Activated CD8-positive, alpha-beta T cell treated with anti-CD3 and anti-CD28 coated beads, Interleukin-2, amount 10 ng/mL, durations not matched to agents 7 days and 5 days (primary cell): ENCODE measurements at regions of chr3 and their contacts with region 1.

Region 1: DNA sequence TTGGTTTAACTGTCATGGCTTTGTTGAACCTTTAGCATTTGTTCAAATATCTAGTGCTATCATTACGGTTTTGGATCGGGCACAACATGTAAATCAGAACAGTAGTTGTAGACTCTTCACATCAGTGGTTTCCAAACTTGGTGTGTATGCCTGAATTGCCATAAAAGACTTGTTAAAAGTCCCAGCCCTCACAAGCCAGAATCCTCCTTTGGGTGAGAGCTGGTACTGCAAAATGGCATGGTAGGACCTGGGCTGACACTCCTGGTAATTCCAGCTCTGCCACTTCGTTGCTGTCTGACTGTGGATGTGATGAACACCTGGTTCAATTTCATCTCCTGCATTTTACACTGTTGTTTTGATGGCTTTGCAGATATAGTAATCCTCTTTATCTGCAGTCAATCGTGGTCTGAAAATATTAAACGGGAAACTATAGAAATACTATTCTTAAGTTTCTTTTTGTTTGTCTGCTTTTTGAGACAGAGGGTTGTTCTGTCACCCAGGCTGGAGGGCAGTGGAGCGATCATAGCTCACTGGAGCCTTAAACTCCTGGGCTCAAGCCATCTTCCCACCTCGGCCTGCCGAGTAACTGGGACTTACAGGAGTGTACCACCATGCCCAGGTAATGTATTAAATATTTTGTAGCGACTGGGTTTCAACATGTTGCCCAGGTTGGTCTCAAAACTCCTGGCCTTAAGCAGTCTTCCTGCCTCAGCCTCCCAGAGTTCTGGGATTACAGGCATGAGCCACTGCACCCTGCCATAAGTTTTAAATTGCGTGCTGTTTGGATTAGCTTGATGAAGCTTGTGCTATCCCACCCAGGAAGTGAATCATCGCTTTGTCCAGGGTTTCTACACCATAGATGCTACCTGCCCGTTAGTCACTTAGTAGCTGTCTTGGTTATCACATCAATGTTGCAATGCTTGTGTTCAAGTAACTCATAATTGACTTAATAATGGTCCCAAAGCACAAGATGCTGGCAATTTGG is 61.6 kb downstream of the RAB7A start:
- DNase-seq: peak; percentile 53
- ATAC-seq: peak; percentile 64
- H3K4me3 Mint-ChIP-seq: peak overlapping the region; percentile 75
- H3K27ac Mint-ChIP-seq: peak overlapping the region; percentile 96
- H3K4me1 Mint-ChIP-seq: peaks cover 82% of the 10 kb centered on the region
- H3K27me3 Mint-ChIP-seq: no peaks in the 10 kb centered on the region

Region 2: GRCh38 chr3:128674161-128674784 is 113.3 kb before region 1 on chr3:
- CTCF ChIA-PET with region 1: interaction called, 256 read pairs
- POLR2A ChIA-PET with region 1: no interaction called
- DNase-seq: no peak
- ATAC-seq: no peak
- H3K4me3 Mint-ChIP-seq: peak overlapping the region; percentile 50
- H3K27ac Mint-ChIP-seq: peak overlapping the region; percentile 73
- H3K4me1 Mint-ChIP-seq: peaks cover 17% of the 10 kb centered on the region
- H3K27me3 Mint-ChIP-seq: peaks cover 25% of the 10 kb centered on the region

Region 3: GRCh38 chr3:128725932-128726690 is 61.4 kb before region 1 on chr3 and contains the start of gene RAB7A:
- CTCF ChIA-PET with region 1: interaction called, 5 read pairs
- POLR2A ChIA-PET with region 1: interaction called, 10 read pairs
- DNase-seq: peak; percentile 98
- ATAC-seq: peak; percentile 95
- H3K4me3 Mint-ChIP-seq: peak within 1 kb of the TSS; percentile 86
- H3K27ac Mint-ChIP-seq: peak within 1 kb of the TSS; percentile 91
- H3K4me1 Mint-ChIP-seq: peaks cover 48% of the 10 kb centered on the region
- H3K27me3 Mint-ChIP-seq: peaks cover 6% of the 10 kb centered on the region
- total RNA-seq, gene RAB7A: 256 to 269 TPM

Region 4: DNA sequence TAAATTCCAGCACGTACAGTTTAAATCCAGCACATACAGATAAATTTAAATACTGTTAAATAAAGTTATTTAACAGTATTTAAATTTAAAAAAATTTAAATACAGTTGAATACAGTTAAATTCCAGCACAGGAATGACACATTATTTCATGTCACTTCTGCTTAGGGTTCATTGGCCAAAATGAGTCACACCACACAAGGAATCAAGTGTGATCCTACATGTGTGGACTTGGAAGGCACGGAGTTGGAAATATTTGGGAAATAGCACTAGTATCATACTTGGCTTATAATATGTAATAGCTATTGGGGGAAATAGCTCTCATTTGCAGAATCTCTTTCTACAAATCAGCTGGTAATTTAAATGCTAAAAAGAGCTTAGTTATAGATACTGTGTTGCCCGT is 50.9 kb before region 1 on chr3:
- CTCF ChIA-PET with region 1: interaction called, 10 read pairs
- POLR2A ChIA-PET with region 1: no interaction called
- DNase-seq: no peak
- ATAC-seq: no peak
- H3K4me3 Mint-ChIP-seq: no peak overlapping the region
- H3K27ac Mint-ChIP-seq: no peak overlapping the region
- H3K4me1 Mint-ChIP-seq: peaks cover 54% of the 10 kb centered on the region
- H3K27me3 Mint-ChIP-seq: no peaks in the 10 kb centered on the region

Region 5: GRCh38 chr3:128804017-128804810 is 16.7 kb after region 1 on chr3:
- CTCF ChIA-PET with region 1: interaction called, 68 read pairs
- POLR2A ChIA-PET with region 1: interaction called, 6 read pairs
- DNase-seq: peak; percentile 82
- ATAC-seq: peak; percentile 89
- H3K4me3 Mint-ChIP-seq: peak overlapping the region; percentile 71
- H3K27ac Mint-ChIP-seq: peak overlapping the region; percentile 90
- H3K4me1 Mint-ChIP-seq: peaks cover 68% of the 10 kb centered on the region
- H3K27me3 Mint-ChIP-seq: no peaks in the 10 kb centered on the region